Left cardiac atrium (tissue), 4 donors: ENCODE measurements at regions of chr6 and their contacts with region 1.

Region 1: GRCh38 chr6:68634726-68635411 is at the start of gene ADGRB3:
- DNase-seq: peak; percentile 82
- ATAC-seq: peak; percentile 95 to 97
- total RNA-seq, gene ADGRB3: 1.7 to 2.3 TPM

Region 2: GRCh38 chr6:68778356-68779020 is 143.6 kb after region 1 on chr6:
- intact Hi-C with region 1: loop called (anchors 5 kb)
- DNase-seq: no peak
- ATAC-seq: peak; percentile 78 to 86

Region 3: DNA sequence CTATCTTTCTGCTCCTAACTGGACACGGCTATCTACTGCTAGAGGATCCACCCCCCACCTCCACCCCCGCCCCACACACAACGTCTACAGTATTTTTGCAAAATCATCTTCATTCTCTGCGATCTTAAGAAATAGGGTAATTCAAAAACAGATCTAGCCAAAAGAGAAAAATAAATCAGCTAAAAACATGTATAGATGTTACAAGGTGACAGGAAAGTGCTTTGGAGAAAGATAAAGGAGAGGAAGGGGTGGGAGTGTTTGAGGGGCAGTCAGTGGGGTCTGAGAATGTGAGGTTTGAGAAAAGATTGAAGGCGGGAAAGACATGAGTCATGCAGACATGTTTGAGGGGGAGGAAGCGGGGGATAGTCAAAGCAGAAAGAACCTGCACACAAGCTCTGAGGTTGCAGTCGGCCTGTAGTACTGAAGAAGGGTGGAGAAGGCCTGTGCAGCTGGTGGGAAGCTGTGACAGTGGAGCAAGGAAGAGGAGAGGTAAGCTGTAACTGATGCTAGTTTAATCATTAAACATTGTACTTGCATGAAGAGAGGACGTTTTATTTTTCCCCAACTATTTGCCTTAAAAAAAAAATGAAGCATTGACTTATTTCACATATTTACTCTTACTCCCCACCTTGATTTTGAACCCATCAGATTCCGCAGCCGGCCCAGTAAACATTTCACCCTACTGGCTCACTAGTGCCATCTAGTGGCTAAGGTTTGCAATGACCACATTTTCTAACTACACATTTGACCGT is 332.9 kb after region 1 on chr6:
- intact Hi-C with region 1: loop called in 1 of 2 experiments (anchors 10 kb)
- DNase-seq: peak; percentile 48
- ATAC-seq: peak; percentile 55 to 68